Left cardiac atrium (tissue), 4 donors: ENCODE measurements at regions of chr6 and their contacts with region 1.

Region 1: DNA sequence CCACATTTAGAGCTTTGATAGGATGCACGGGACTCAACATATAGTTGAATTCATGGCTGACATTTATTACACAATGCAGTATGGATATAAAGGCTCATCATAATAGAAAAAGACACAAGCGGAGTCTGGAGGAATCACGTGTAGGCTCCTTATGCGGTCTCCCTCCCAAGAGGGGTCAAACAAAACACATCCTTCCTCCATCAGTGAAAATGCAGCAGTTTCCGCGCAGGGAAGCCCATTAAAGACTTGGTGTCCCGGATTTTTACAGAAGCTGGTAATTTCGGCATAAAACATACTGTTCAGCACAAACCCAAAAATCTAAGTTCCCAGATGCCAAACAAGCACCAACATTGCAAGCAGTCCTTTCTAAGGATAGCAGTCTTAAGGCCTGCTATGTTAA is 1.1 kb downstream of the USP45 start:
- DNase-seq: no peak
- ATAC-seq: no peak

Region 2: GRCh38 chr6:99425647-99426453 is 88.2 kb before region 1 on chr6:
- intact Hi-C with region 1: loop called in 1 of 2 experiments (anchors 10 kb)
- DNase-seq: peak; percentile 89
- ATAC-seq: peak; percentile 79 to 85